MCF 10A (cell line): ENCODE measurements at regions of chr12 and their contacts with region 1.

Region 1: GRCh38 chr12:89162704-89163261 is 189.5 kb downstream of the DUSP6 start:
- DNase-seq: peak; percentile 99
- H3K4me3 Mint-ChIP-seq: no peak overlapping the region
- H3K27ac Mint-ChIP-seq: no peak overlapping the region
- H3K4me1 Mint-ChIP-seq: peaks cover 17% of the 10 kb centered on the region
- H3K27me3 Mint-ChIP-seq: no peaks in the 10 kb centered on the region
- CTCF ChIP-seq: no peak

Region 2: DNA sequence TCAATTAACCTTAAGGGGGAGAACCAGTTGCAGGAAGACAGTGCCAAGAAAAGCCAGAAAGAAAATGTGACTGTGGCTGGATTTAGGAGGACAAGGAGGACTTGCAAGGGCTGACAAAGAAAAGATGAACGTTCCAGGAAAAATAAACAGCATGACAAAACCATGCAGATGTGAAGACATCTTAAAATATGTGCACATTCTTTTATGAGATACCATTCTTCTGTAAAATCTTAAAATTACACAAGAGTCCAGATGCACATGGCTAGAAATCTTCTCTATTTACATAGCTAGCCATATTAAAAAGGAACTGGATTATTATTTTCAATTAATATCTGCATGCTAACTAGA is 615.9 kb before region 1 on chr12:
- CTCF ChIA-PET with region 1: no interaction called
- POLR2A ChIA-PET with region 1: no interaction called
- intact Hi-C with region 1: no loop called
- DNase-seq: peak; percentile 40
- H3K4me3 Mint-ChIP-seq: no peak overlapping the region
- H3K27ac Mint-ChIP-seq: no peak overlapping the region
- H3K4me1 Mint-ChIP-seq: peaks cover 25% of the 10 kb centered on the region
- H3K27me3 Mint-ChIP-seq: no peaks in the 10 kb centered on the region
- CTCF ChIP-seq: no peak

Region 3: GRCh38 chr12:89179983-89180382 is 17.2 kb after region 1 on chr12:
- CTCF ChIA-PET with region 1: interaction called, 6 read pairs
- POLR2A ChIA-PET with region 1: interaction called, 114 read pairs
- intact Hi-C with region 1: loop called (anchors 1 kb)
- DNase-seq: peak; percentile 100
- H3K4me3 Mint-ChIP-seq: peak overlapping the region; percentile 64
- H3K27ac Mint-ChIP-seq: peak overlapping the region; percentile 78
- H3K4me1 Mint-ChIP-seq: peaks cover 41% of the 10 kb centered on the region
- H3K27me3 Mint-ChIP-seq: no peaks in the 10 kb centered on the region
- CTCF ChIP-seq: no peak

Region 4: DNA sequence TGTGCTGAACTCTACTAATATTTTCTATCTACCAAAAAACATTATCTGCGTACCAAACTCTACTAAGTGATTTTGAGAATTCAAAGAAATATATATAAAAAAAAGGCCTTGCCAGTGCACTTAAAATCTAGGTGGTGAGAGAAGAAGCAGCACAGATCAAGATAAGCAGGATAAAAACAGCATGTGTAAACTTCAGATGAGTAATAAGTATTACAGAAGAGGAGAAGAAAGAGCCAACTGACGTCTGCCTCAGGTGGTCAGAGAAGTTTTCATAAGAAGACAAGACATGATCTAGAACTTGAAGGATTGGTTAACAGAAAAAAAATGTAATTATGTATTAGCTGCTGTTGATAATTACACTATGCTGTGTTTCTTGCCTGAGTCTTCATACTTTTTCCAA is 23.1 kb after region 1 on chr12:
- CTCF ChIA-PET with region 1: interaction called, 5 read pairs
- POLR2A ChIA-PET with region 1: interaction called, 114 read pairs
- intact Hi-C with region 1: no loop called
- DNase-seq: no peak
- H3K4me3 Mint-ChIP-seq: no peak overlapping the region
- H3K27ac Mint-ChIP-seq: no peak overlapping the region
- H3K4me1 Mint-ChIP-seq: peaks cover 40% of the 10 kb centered on the region
- H3K27me3 Mint-ChIP-seq: no peaks in the 10 kb centered on the region
- CTCF ChIP-seq: no peak

Region 5: DNA sequence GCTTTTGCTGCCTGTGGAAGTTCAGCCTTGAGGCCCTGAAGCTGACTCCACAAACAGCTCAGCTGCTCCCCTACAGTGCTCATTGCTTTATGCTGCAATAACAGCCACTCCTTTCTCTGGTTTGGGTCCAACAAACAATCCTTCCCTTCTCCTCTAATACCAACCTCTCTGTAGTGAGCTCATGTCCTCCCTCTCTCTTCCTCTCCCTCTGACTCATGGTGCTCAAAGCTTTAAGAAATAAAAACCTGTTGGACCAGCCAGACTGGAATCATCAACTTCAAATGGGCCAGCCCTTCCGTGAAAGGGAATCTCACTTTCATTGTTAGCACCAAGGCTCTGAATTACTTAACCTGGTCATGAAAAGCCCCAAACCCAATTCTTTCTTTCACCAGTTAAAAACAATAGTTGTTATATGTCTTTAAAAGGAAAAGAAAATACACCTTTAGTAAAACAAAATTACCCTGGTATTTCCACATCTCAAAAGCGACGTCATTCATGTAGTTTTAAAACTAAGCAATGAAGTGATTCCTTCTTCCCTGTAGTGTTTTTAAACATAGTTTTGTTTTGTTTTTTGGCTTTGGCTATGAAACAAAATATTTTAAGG is 63.1 kb after region 1 on chr12:
- CTCF ChIA-PET with region 1: interaction called, 4 read pairs
- POLR2A ChIA-PET with region 1: interaction called, 6 read pairs
- intact Hi-C with region 1: loop called (anchors 10 kb)
- DNase-seq: peak; percentile 96
- H3K4me3 Mint-ChIP-seq: peak overlapping the region; percentile 48
- H3K27ac Mint-ChIP-seq: peak overlapping the region; percentile 93
- H3K4me1 Mint-ChIP-seq: peaks cover 30% of the 10 kb centered on the region
- H3K27me3 Mint-ChIP-seq: no peaks in the 10 kb centered on the region
- CTCF ChIP-seq: no peak